OCI-LY7 (cell line): ENCODE measurements at regions of chr2 and their contacts with region 1.

Region 1: DNA sequence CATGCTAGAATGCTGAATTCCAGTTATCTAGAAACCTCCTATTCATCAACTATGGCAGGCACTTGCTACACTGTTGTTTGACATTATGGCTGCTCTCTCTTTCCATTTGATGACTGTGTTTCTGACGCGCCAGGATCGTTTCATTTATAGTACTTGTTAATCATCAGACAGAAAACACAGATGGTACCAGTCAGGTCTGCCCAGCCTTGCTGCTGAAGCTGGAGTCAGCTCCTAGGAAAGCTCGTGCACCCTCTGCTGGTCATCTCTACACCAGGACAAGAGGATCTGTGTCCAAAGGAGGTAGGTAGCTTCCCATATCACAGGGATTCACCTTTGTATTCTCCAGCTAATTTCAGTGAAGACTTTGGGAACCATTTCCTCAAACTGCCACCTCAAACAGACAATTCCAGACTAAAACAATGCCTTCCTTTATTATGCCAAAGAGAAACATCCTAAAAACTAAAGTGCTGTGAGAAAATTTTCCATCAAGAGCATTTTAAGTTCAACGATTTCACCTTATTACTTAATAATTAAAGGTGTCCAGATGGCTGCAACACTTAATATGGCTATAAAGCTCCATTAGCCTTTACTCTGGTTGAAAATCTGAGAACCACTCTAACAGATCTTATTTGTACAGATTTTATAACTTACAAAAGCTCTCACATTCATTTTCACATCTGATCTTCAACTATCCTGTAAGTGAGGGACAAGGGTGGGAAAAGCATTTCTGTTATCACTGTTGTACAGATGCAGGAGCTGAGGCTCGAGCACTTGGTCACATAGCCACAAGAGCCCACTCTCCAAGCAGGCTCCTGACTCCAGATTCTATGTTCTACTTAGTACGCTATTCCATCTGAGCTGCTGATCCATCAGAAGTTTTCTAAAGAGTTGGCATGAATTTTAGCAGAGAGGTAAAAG is 17.5 kb downstream of the METTL8 start:
- DNase-seq: peak; percentile 96
- H3K4me3 ChIP-seq: peak overlapping the region; percentile 3
- H3K27ac ChIP-seq: peak overlapping the region; percentile 62
- H3K4me1 ChIP-seq: peaks cover 41% of the 10 kb centered on the region
- CTCF ChIP-seq: peak; percentile 98

Region 2: DNA sequence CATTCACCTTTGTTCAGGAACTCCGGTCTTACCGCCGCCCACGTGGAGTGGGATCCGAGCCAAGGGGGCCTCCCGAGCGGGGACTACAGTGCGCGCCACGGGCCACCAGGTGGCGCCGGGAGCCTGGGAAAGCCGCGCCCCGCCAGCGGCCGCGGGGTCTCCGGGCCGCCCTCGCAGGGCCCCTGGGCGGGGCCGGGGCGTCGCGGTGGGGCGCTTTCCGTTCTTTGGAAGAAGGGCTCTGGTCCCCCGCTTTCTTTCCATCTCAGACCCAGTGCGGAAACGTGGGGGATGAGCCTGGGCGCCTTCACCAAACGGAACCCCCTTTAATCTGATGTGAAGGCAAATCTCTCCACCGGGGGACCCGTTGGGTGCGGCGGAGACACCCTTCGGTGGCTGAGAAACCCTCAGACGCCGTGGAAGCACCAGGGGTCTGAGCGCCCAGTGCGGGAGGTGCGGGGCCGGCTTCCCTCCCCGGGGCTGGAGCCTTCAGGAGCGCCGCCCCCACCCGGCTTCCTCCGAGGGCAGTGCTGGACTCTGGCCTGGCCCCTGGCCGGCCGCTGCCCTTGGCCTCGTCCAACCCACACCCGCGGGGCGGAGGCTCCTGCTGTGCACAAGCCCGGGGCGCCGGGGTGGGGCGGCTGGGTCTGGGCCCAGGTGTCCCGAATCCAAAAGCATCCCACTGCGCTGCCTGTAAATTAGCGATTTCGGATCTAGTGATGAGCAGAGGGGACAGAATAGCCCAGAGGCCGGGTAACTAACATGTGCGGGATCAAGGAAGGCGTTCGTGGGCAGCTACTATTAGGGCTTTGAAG is 442.6 kb before region 1 on chr2:
- CTCF ChIA-PET with region 1: no interaction called
- POLR2A ChIA-PET with region 1: interaction called, 5 read pairs
- intact Hi-C with region 1: loop called (anchors 1 kb)
- DNase-seq: peak; percentile 87
- H3K4me3 ChIP-seq: peak overlapping the region; percentile 70
- H3K27ac ChIP-seq: no peak overlapping the region
- H3K4me1 ChIP-seq: peaks cover 16% of the 10 kb centered on the region
- CTCF ChIP-seq: peak; percentile 98

Region 3: DNA sequence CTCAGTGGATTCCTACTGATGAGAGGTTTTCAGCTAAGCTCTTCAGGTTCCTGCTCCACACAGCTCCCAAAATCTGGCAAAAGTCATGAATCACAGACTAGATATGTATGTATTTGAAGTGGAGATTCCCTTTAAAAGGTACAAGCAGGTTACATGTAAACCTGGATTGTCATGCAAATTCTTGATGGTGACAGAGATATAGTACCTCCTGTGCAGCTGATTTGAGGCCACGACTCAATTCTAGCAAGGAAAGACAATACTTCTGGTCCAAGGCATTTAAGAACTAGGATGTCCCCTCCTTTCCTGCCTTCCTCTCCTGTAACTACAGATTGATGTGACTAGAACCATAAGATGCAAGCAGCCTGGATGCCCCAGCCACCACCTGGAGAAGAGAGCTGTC is 432.2 kb before region 1 on chr2:
- CTCF ChIA-PET with region 1: no interaction called
- POLR2A ChIA-PET with region 1: no interaction called
- intact Hi-C with region 1: no loop called
- DNase-seq: no peak
- H3K4me3 ChIP-seq: no peak overlapping the region
- H3K27ac ChIP-seq: no peak overlapping the region
- H3K4me1 ChIP-seq: no peaks in the 10 kb centered on the region
- CTCF ChIP-seq: no peak

Region 4: DNA sequence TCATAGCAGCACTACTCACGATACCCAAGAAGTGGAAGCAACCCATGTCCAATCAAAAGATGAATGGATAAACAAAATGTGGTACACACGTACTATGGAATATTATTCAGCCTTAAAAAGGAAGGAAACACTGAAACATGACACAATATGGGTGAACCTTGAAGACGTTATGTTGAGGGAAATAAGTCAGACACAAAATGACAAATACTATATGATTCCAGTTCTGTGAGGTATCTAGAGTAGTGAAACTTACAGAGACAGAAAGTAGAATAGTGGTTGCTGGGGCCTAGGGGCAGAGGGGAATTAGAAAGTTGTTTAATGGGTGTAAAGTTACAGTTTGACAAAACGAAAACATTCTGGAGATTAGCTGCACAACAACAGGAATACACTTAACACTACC is 280.2 kb before region 1 on chr2:
- CTCF ChIA-PET with region 1: no interaction called
- POLR2A ChIA-PET with region 1: no interaction called
- intact Hi-C with region 1: no loop called
- DNase-seq: no peak
- H3K4me3 ChIP-seq: no peak overlapping the region
- H3K27ac ChIP-seq: no peak overlapping the region
- H3K4me1 ChIP-seq: peaks cover 29% of the 10 kb centered on the region
- CTCF ChIP-seq: no peak

Region 5: DNA sequence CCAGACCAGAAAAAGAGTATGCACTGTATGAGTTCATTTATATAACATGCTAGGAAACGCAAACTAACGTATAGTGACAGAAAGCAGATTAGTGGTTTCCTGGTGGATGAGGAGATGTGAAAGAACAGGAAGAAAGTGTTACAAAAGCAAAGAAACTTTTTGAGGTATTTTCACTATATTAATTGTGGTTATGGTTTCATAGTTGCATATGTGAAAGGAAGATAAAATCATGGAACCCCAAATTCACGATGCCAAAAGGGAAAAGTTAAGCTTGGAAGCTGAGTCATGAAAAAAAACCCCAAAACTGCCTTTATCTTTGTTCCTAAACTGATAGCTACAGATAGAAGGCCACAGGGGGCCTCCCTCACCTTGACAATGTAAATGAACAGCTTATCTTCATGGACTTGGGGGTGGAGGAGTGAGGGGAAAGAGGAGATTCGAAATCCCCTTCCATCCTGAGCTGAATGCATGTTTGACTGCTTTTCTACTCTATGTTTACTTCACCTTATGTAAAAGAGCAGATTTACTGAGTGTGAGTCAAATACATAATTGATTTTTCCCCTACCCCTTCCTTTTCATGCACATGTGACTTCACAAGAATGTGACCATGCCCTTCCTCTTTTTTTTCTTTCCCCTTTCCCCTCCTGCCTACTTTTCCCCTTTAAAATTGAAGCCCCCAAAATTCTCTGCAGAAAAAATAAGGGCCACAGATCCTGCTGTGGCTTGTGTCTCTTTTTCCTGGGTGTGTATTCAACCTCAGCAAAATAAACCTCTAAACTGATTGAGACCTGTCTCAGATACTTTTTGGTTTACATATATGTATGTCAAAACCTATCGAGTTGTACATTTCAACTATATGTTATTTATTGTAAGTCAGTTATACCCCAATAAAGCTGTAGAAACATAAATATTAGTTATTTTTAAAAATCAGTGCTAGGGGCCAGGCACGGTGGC is 155.5 kb before region 1 on chr2:
- CTCF ChIA-PET with region 1: no interaction called
- POLR2A ChIA-PET with region 1: no interaction called
- intact Hi-C with region 1: loop called (anchors 1 kb)
- DNase-seq: peak; percentile 15
- H3K4me3 ChIP-seq: no peak overlapping the region
- H3K27ac ChIP-seq: no peak overlapping the region
- H3K4me1 ChIP-seq: peaks cover 15% of the 10 kb centered on the region
- CTCF ChIP-seq: peak; percentile 37; the same call in 1 of the 2 replicates

Region 6: GRCh38 chr2:171287611-171288010 is 128.7 kb before region 1 on chr2:
- CTCF ChIA-PET with region 1: no interaction called
- POLR2A ChIA-PET with region 1: no interaction called
- intact Hi-C with region 1: no loop called
- DNase-seq: no peak
- H3K4me3 ChIP-seq: no peak overlapping the region
- H3K27ac ChIP-seq: no peak overlapping the region
- H3K4me1 ChIP-seq: peaks cover 10% of the 10 kb centered on the region
- CTCF ChIP-seq: no peak

Region 7: DNA sequence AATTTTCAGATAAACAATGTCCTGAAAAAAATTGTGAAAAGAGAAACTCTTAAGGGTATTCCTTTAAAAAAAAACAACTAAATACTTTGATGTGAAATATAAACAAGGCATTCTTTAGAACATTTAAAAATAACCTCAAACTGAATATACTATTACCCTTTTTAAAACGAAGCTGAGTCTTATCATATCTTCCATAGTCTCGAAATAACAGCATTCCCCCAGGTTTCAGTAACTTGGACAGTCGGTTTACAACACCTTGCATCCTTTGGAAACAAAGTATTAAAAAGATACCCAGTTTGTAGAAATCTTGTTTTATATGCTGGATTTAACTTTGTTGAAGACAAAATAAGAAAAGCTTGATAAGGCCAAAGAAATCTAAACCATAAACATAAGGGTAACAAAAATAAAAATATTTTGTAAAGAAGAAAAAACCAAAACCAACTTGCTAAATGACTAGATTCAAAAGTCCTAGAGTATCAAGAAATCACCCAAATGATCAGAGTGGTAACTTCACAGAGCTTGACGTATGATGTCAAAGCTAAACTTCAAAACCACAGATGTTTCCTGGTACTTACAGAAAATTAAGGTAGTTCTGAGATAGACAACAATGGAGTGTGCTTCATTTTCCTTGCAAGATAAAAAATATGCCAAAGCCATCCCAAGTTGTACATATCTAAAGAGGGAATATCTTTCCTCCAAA is 90.2 kb before region 1 on chr2:
- CTCF ChIA-PET with region 1: interaction called, 9 read pairs
- POLR2A ChIA-PET with region 1: interaction called, 7 read pairs
- intact Hi-C with region 1: loop called (anchors 1 kb)
- DNase-seq: no peak
- H3K4me3 ChIP-seq: no peak overlapping the region
- H3K27ac ChIP-seq: peak overlapping the region; percentile 100
- H3K4me1 ChIP-seq: peaks cover 93% of the 10 kb centered on the region
- CTCF ChIP-seq: no peak

Region 8: DNA sequence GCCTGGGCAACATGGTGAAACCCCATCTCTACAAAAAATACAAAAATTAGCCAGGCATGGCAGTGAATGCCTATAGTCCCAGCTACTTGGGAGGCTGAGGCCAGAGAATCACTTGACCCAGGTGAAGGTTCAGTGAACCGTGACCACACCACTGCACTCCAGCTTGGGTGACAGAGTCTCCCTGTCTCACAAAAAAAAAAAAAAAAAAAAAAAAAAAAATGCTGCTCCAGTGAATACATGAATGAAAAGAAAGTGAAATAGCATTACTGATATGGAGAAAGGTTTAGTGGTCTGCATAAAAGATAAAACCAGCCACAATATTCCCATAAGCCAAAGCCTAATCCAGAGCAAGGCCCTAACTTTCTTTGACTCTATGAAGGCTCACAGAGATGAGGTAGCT is 26.9 kb before region 1 on chr2:
- CTCF ChIA-PET with region 1: interaction called, 3 read pairs
- POLR2A ChIA-PET with region 1: interaction called, 14 read pairs
- intact Hi-C with region 1: no loop called
- DNase-seq: peak; percentile 76
- H3K4me3 ChIP-seq: no peak overlapping the region
- H3K27ac ChIP-seq: peak overlapping the region; percentile 78
- H3K4me1 ChIP-seq: peaks cover 88% of the 10 kb centered on the region
- CTCF ChIP-seq: no peak